Activated CD4-positive, alpha-beta T cell treated with anti-CD3 and anti-CD28 coated beads, Interleukin-2, amount 10 ng/mL, durations not matched to agents 7 days and 5 days (primary cell): ENCODE measurements at regions of chr2 and their contacts with region 1.

Region 1: DNA sequence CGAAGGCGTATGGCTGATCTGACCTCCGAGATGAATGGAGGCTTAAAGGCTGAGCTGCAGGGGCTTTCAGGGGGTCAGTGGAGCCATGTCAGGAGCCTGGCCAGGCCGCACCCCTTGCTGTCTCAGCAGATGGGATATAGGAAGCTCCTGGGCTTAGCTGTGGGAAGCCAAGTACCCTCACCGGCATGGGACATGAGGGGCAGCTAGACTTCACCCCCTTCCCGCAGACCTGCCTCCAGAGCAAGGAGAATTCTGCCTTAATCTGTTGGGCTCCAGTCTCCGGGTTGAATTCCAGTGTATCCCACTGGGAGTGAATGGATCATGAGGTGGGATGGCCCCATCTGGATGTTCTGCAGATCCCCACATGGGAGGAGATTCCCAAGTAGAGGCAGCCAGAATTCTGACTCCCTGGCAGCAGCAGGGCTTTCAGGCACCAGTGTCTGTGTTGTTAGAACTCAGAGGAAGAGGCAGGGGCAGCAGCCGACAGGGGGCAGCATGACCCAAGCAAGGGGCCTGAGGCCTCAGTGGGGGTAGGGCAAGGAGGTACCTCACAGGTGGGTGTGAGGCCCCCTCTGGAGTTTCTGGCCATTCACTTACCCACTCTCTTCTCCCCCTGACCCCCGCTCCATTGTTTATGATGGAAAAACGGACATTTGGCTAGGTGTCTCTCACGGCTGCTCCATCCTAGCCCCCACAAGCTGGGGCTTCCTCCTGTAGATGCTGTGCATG is 19.1 kb downstream of the CAPG start:
- DNase-seq: peak; percentile 83
- H3K4me3 Mint-ChIP-seq: no peak overlapping the region
- H3K27ac Mint-ChIP-seq: peak overlapping the region; percentile 74
- H3K4me1 Mint-ChIP-seq: peaks cover 25% of the 10 kb centered on the region
- H3K27me3 Mint-ChIP-seq: no peaks in the 10 kb centered on the region

Region 2: GRCh38 chr2:84849271-84849952 is 541.7 kb before region 1 on chr2:
- CTCF ChIA-PET with region 1: no interaction called
- POLR2A ChIA-PET with region 1: no interaction called
- DNase-seq: peak; percentile 56
- H3K4me3 Mint-ChIP-seq: peak overlapping the region; percentile 54
- H3K27ac Mint-ChIP-seq: peak overlapping the region; percentile 88
- H3K4me1 Mint-ChIP-seq: peaks cover 89% of the 10 kb centered on the region
- H3K27me3 Mint-ChIP-seq: no peaks in the 10 kb centered on the region

Region 3: DNA sequence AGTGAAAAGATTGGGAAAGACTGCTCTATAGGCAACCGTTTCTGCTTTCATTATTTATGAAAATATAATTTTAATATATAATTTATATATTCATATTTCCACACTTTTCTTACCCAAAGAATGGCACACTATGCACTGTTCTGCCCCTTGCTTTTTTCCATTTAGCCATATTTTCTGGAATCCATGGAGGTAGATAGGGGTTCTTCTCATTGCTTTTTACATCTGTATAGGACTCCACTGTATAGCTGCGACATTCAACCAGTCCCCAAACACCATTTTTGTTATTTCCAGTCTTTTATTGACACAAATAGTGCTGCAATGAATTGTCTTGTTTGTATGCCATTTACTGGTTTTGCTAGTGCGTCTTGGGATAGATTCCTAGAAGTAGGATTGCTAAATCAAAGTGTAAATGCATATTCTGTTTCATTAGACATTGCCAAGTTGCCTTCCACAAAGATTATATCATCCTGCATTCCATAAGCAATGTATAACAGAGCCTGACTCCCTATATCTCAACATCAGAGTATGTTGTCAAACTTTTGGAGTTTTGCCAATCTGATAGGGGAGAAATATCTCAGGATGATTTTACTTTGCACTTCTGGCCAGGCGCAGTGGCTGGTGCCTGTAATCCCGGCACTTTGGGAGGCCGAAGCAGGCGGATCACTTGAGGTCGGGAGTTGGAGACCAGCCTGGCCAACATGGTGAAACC is 284.4 kb before region 1 on chr2:
- CTCF ChIA-PET with region 1: no interaction called
- POLR2A ChIA-PET with region 1: no interaction called
- DNase-seq: no peak
- H3K4me3 Mint-ChIP-seq: no peak overlapping the region
- H3K27ac Mint-ChIP-seq: no peak overlapping the region
- H3K4me1 Mint-ChIP-seq: no peaks in the 10 kb centered on the region
- H3K27me3 Mint-ChIP-seq: peaks cover 9% of the 10 kb centered on the region

Region 4: DNA sequence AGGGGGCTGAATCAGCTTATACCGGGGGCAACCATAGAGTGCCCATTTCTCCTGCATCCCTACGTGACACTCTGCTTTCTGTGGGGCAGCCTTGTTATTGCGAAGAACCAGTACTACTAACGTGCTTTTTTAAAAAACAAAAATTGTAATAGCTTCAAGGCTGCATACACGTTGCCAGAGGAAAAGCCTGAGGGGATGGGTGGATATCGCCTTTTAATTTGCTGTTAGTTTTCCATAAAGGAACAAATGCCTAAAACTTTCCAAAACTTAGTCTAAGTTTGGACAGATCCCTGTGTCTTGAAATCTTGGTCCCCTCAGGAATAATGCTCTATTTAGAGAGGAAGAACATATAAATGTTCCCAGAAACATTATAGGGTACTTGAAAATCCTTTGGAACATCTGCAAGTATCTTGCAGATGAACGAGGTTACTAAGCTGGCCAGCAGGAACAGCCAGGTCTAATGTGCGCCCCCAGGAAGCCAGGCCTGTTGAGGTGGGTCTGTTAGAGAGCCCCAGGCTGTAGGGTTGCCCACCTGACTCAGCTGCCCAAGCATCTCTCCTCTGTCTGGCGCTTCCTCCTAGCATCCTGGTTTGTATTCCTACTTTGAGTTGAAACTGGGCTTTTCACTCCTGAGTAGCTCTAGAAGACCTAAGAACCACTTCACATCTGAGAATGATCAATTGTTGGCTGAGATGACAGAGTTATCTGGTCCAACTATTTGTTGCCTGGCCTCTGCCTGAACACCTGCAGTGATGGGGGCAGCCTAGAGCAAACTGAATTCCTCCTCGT is 160.2 kb before region 1 on chr2:
- CTCF ChIA-PET with region 1: no interaction called
- POLR2A ChIA-PET with region 1: no interaction called
- DNase-seq: no peak
- H3K4me3 Mint-ChIP-seq: no peak overlapping the region
- H3K27ac Mint-ChIP-seq: no peak overlapping the region
- H3K4me1 Mint-ChIP-seq: no peaks in the 10 kb centered on the region
- H3K27me3 Mint-ChIP-seq: peaks cover 25% of the 10 kb centered on the region

Region 5: GRCh38 chr2:85413592-85414421 is 22.7 kb after region 1 on chr2:
- CTCF ChIA-PET with region 1: interaction called, 11 read pairs
- POLR2A ChIA-PET with region 1: no interaction called
- DNase-seq: peak; percentile 41
- H3K4me3 Mint-ChIP-seq: peak overlapping the region; percentile 82
- H3K27ac Mint-ChIP-seq: peak overlapping the region; percentile 86
- H3K4me1 Mint-ChIP-seq: peaks cover 63% of the 10 kb centered on the region
- H3K27me3 Mint-ChIP-seq: peaks cover 2% of the 10 kb centered on the region

Region 6: GRCh38 chr2:85475799-85476490 is 84.8 kb after region 1 on chr2:
- CTCF ChIA-PET with region 1: no interaction called
- POLR2A ChIA-PET with region 1: no interaction called
- DNase-seq: no peak
- H3K4me3 Mint-ChIP-seq: no peak overlapping the region
- H3K27ac Mint-ChIP-seq: no peak overlapping the region
- H3K4me1 Mint-ChIP-seq: no peaks in the 10 kb centered on the region
- H3K27me3 Mint-ChIP-seq: no peaks in the 10 kb centered on the region